ENCODE measurements at regions of chr2 and their contacts with region 1.

Region 1: DNA sequence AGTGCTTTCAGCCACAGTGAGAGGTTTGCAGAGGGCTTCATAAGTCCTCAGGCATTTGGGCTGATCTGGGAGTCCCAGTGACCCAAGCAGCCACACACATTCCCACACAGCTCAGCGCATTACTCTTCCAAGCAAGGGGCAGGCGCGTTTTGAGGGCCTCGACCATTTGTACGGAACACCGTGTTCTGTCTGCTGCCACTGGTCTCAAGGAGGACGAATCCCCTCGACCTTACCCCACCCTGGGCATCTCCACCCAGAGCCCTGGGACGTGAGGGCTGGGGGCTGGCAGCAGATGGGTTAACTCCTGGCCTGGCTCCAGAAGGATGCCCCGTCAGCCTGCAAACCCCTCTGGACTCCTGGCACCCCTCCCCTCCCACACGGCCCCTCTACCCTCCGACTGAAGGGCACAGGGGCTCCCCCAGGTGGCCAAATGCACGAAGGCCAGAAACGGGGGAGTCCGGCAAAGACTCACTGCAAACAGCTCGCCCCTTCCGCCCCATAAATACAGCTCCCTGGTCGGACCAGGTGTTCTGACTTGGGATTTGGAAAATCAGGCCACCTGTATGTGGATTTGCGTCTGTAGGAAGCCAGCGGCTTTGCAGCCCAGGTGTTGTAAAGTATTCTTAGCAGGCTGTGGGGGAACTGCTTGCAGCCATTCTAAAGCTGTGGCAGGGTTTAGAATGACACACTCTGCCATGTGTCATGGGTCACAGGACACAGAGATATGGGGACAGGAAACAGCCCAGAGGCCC is 33.6 kb upstream of the PTMA start:
- DNase-seq: peak; percentile 67
- ATAC-seq: peak; percentile 79
- H3K4me3 ChIP-seq: peak overlapping the region; percentile 24; the same call in 1 of the 2 replicates
- H3K27ac ChIP-seq: no peak overlapping the region
- H3K4me1 ChIP-seq: peaks cover 6% of the 10 kb centered on the region
- H3K27me3 ChIP-seq: no peaks in the 10 kb centered on the region
- CTCF ChIP-seq: peak; percentile 88

Region 2: GRCh38 chr2:231612179-231613053 is 62.3 kb before region 1 on chr2:
- CTCF ChIA-PET with region 1: interaction called, 15 read pairs
- POLR2A ChIA-PET with region 1: interaction called, 3 read pairs
- intact Hi-C with region 1: loop called (anchors 1 kb)
- DNase-seq: peak; percentile 84
- ATAC-seq: peak; percentile 59
- H3K4me3 ChIP-seq: peak overlapping the region; percentile 38; the same call in 1 of the 2 replicates
- H3K27ac ChIP-seq: peak overlapping the region; percentile 91
- H3K4me1 ChIP-seq: peaks cover 37% of the 10 kb centered on the region
- H3K27me3 ChIP-seq: no peaks in the 10 kb centered on the region
- CTCF ChIP-seq: peak; percentile 93

Region 3: DNA sequence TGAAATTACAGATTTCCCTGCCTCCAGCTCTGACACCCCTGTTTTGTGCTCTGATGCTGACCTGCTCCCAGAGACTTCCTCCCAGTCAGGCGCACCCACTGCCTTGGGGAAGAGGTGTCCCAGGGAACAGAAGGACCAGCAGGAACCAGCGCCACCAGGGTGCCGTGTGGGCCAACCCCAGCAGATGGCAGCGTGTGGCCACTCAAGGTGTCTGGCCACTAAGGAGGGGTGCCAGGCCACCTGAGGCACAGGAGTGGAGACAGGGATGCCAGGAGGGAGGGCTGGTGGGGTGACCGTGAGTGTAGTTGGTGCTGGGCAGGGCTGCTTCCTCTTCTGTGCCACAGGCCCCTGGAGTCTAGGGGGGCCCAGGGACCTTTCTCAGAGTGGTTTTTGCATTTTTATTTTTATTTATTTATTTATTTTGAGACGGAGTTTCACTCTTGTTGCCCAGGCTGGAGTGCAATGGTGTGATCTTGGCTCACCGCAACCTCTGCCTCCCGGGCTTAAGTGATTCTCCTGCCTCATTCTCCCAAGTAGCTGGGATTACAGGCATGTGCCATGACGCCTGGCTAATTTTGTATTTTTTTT is 26.1 kb before region 1 on chr2:
- CTCF ChIA-PET with region 1: interaction called, 17 read pairs
- POLR2A ChIA-PET with region 1: interaction called, 7 read pairs
- intact Hi-C with region 1: loop called (anchors 1 kb)
- DNase-seq: peak; percentile 80
- ATAC-seq: peak; percentile 100
- H3K4me3 ChIP-seq: no peak overlapping the region
- H3K27ac ChIP-seq: no peak overlapping the region
- H3K4me1 ChIP-seq: peaks cover under 1% of the 10 kb centered on the region; the same call in 1 of the 2 replicates
- H3K27me3 ChIP-seq: no peaks in the 10 kb centered on the region
- CTCF ChIP-seq: peak; percentile 85

Region 4: DNA sequence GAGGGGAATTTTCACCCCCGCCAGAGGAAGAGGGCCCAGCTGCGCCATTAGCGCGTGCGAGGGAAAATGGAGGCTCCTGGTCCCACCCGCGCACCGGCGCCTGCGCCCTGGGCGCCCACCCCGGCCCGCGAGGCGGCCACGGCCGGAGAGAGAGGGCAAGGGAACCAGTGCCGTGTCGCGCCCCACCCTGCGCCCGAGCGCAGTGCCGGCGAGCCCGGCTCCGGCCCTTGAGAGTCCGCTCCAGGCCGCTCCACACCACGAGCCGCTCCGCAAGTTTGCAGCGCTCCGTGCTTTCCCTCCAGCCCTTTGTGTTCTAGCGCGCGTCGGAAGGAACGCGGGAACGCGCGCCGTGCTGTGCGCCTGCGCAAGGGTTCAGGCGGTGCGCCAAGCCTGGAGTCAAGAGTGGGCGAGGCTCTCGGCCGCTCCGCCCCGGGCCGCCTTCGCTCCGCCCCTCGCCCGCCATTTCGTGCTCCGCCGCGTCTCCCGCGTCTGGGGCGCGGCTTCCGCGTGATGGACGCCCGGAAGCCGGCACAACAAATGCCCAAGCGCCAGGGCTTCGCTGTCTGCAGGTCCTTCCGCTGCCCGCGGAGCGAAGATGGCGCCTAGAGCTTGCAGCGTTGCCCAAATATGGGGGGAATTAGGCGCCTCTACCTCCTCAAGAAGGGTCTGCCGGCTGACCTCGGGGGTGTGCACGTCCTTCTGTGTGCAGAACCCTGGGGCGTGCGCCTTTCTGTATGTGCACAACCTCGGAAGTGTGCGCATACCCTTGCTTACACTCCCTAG is 12.5 kb before region 1 on chr2:
- CTCF ChIA-PET with region 1: interaction called, 7 read pairs
- POLR2A ChIA-PET with region 1: no interaction called
- intact Hi-C with region 1: loop called (anchors 1 kb)
- DNase-seq: peak; percentile 97
- ATAC-seq: peak; percentile 59
- H3K4me3 ChIP-seq: peak overlapping the region; percentile 52
- H3K27ac ChIP-seq: peak overlapping the region; percentile 46
- H3K4me1 ChIP-seq: peaks cover 24% of the 10 kb centered on the region
- H3K27me3 ChIP-seq: no peaks in the 10 kb centered on the region
- CTCF ChIP-seq: no peak

Region 5: DNA sequence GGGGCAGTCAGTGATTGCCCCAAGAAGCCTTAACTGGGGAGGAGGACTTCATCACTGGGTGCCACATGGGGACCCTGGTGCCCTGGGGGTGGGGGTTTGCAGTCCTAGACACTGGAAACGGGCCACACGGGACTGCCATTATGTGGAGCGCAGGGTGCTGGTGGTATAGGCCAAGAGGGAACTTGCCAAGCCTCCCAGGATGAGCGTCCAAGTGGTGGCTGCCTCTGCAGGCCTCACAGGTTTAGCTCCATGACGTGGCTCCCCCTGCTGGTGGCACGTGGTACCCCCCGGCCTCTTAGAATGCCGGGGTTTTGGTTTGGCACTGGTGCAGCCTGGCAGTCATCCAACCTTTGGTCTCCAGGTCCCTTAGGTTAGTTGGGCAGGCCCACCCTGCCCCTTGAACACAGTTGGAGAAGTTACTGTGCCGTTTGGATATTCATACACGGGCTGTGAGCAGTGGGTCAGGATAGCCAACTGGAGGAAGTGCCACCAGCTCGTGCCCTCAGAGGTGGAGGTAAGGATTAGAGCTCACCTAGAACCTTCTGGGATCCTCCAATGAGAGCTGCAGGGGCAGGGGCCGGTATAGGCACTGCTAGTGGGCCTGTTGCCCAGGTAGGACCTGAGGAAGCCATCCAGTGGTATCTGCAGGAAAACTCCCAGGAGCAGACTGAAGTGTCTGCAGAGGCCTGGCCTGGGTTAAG is 39.1 kb after region 1 on chr2:
- CTCF ChIA-PET with region 1: interaction called, 108 read pairs
- POLR2A ChIA-PET with region 1: no interaction called
- intact Hi-C with region 1: loop called (anchors 1 kb)
- DNase-seq: peak; percentile 92
- ATAC-seq: peak; percentile 44
- H3K4me3 ChIP-seq: no peak overlapping the region
- H3K27ac ChIP-seq: no peak overlapping the region
- H3K4me1 ChIP-seq: peaks cover 30% of the 10 kb centered on the region
- H3K27me3 ChIP-seq: no peaks in the 10 kb centered on the region
- CTCF ChIP-seq: peak; percentile 90

Measured in PC-3 (cell line).